B cell (primary cell): ENCODE measurements at regions of chr7 and their contacts with region 1.

Region 1: DNA sequence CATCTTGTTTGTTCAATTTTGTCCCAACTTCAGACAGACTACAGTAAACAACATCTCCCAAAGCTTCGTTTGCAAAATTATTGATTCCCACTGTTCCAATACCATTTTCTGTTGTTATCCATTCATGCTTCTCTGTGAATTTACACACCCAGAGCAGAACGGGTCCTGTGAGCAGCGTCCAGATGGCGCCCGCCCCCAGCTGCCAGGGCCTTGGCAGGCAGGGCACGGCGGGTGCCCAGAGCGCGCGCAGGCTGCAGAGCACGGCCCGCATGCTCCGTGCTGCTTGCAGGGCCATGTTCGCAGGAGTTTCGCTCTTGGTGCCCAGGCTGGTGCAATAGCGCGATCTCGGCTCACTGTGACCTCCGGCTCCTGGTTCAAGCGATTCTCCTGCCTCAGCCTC is 32.5 kb upstream of the SEPTIN7 start:
- DNase-seq: no peak
- ATAC-seq: no peak
- H3K4me3 ChIP-seq: no peak overlapping the region
- H3K4me3 Mint-ChIP-seq: no peak overlapping the region
- H3K27ac ChIP-seq: no peak overlapping the region
- H3K27ac Mint-ChIP-seq: no peak overlapping the region
- H3K4me1 ChIP-seq: no peaks in the 10 kb centered on the region
- H3K4me1 Mint-ChIP-seq: peaks cover 3% of the 10 kb centered on the region
- H3K27me3 ChIP-seq: no peaks in the 10 kb centered on the region
- H3K27me3 Mint-ChIP-seq: no peaks in the 10 kb centered on the region
- CTCF ChIP-seq: no peak

Region 2: GRCh38 chr7:35792873-35793489 is 24.6 kb after region 1 on chr7:
- CTCF ChIA-PET with region 1: no interaction called
- POLR2A ChIA-PET with region 1: interaction called, 13 read pairs
- intact Hi-C with region 1: loop called (anchors 5 kb)
- DNase-seq: no peak
- ATAC-seq: no peak
- H3K4me3 ChIP-seq: no peak overlapping the region
- H3K4me3 Mint-ChIP-seq: no peak overlapping the region
- H3K27ac ChIP-seq: no peak overlapping the region
- H3K27ac Mint-ChIP-seq: no peak overlapping the region
- H3K4me1 ChIP-seq: no peaks in the 10 kb centered on the region
- H3K4me1 Mint-ChIP-seq: peaks cover 7% of the 10 kb centered on the region
- H3K27me3 ChIP-seq: no peaks in the 10 kb centered on the region
- H3K27me3 Mint-ChIP-seq: no peaks in the 10 kb centered on the region
- CTCF ChIP-seq: no peak

Region 3: GRCh38 chr7:35875292-35875691 is 106.9 kb after region 1 on chr7:
- CTCF ChIA-PET with region 1: no interaction called
- POLR2A ChIA-PET with region 1: no interaction called
- intact Hi-C with region 1: no loop called
- DNase-seq: no peak
- ATAC-seq: no peak
- H3K4me3 ChIP-seq: no peak overlapping the region
- H3K4me3 Mint-ChIP-seq: no peak overlapping the region
- H3K27ac ChIP-seq: no peak overlapping the region
- H3K27ac Mint-ChIP-seq: no peak overlapping the region
- H3K4me1 ChIP-seq: peaks cover 0 to 4% of the 10 kb centered on the region in 2 donors
- H3K4me1 Mint-ChIP-seq: peaks cover 18% of the 10 kb centered on the region
- H3K27me3 ChIP-seq: no peaks in the 10 kb centered on the region
- H3K27me3 Mint-ChIP-seq: no peaks in the 10 kb centered on the region
- CTCF ChIP-seq: no peak